Left ventricle myocardium inferior (tissue), 1 donor: ENCODE measurements at regions of chr1 and their contacts with region 1.

Region 1: GRCh38 chr1:213858581-213858980 is 129.2 kb upstream of the PROX1 start:
- DNase-seq: no peak
- H3K4me3 ChIP-seq: no peak overlapping the region
- H3K27ac ChIP-seq: no peak overlapping the region
- H3K4me1 ChIP-seq: no peaks in the 10 kb centered on the region
- H3K27me3 ChIP-seq: peaks cover 6% of the 10 kb centered on the region
- CTCF ChIP-seq: no peak

Region 2: GRCh38 chr1:213585959-213586586 is 272.5 kb before region 1 on chr1:
- intact Hi-C with region 1: no loop called
- DNase-seq: no peak
- H3K4me3 ChIP-seq: no peak overlapping the region
- H3K27ac ChIP-seq: no peak overlapping the region
- H3K4me1 ChIP-seq: peaks cover 5% of the 10 kb centered on the region
- H3K27me3 ChIP-seq: no peaks in the 10 kb centered on the region
- CTCF ChIP-seq: no peak

Region 3: DNA sequence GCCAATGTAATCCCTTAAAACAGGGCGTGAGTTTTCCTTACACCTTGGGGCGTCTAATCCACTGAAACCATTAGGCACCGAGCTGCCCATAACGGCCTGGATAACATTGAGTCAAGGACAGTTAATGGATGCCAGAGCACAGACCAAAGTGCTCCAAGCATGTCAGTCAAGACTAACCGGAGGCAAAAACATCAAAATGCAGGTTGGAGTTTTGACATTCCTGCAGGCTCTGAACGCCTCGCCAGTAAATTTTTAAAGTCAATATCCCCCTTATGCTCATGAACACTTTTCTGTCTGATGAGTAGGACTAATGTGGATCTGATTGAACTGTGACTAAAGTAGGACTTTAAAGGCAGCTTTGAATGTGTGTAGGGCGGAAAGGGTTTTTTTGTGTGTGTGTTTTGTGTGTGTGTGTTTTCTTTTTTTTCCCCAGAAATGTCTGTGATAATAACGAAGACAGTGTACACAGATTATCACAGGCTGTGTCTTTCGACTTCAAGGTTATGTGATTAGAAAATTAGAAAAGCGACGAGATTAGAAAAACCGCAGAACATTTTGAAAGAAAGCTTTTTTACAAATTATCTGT is 65.0 kb before region 1 on chr1:
- intact Hi-C with region 1: loop called (anchors 10 kb)
- DNase-seq: no peak
- H3K4me3 ChIP-seq: no peak overlapping the region
- H3K27ac ChIP-seq: no peak overlapping the region
- H3K4me1 ChIP-seq: no peaks in the 10 kb centered on the region
- H3K27me3 ChIP-seq: peaks cover 4% of the 10 kb centered on the region
- CTCF ChIP-seq: no peak